ENCODE measurements at regions of chr11 and their contacts with region 1.

Region 1: DNA sequence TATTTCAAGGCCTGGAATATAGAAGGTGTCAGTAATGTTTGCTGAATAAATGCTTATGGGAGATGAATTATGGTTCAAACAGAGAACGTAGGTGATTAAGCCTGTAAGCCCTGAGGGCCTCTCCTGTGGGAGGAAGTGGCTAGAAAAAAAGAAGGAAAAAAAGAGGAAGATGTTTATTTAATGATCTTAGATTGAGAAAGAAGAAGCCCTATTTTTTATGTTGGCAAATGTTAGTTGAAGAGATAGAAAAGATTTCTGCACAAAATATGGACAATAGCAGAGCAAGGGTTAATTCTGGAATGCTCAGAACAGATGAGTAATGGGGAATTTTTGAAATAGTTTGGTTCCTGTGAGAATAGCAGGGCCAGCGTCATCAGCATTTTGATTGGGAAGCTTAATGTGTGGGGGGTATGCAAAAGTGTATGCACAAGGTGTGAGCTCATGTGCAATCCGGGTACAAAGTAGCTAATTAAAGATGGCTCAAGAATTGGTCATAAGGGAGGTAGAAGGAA is 95.7 kb downstream of the TEAD1 start:
- DNase-seq: peak; percentile 81
- H3K4me3 ChIP-seq: no peak overlapping the region
- H3K27ac ChIP-seq: peak overlapping the region; percentile 86
- H3K4me1 ChIP-seq: peaks cover 39% of the 10 kb centered on the region
- H3K27me3 ChIP-seq: no peaks in the 10 kb centered on the region
- CTCF ChIP-seq: no peak

Region 2: DNA sequence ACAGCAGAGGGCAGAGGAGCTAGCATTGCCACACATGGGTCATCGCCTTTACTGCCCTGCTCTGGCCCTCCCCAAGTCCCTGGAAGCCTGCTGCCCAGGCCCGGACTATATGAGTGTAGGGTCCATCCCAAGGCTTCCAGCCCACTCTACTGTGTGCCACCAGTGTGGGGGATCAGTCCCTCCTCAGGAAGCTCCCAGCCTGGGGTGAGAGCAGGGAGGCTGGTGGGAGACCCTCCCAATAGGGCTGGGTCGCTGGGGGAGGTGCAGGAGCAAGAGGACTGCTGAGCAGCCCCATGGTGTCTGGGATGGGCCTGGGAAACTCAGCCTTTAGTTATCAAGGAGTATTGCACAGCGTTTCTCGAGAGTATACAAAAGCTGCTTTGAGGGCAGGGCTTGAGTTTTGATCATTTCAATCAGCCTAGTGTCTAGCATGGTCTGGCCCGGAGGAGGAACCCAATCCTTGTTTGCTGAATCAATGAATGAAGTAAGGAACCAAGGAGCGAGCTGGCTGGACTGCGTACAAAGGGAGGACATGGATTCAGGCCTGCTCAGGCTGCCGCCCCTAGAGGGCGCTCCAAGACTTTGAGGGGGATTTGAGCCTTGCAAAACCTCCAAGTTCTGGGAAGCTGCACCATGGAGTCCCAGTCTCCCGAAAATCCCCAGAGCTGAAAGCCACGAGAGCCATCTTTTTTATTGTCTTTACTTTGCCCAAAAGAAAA is 481.5 kb before region 1 on chr11:
- CTCF ChIA-PET with region 1: interaction called, 11 read pairs
- dilution Hi-C with region 1: no loop called
- in situ Hi-C with region 1: no loop called
- intact Hi-C with region 1: loop called (anchors 5 kb)
- DNase-seq: peak; percentile 76
- H3K4me3 ChIP-seq: no peak overlapping the region
- H3K27ac ChIP-seq: peak overlapping the region; percentile 77
- H3K4me1 ChIP-seq: peaks cover 49% of the 10 kb centered on the region
- H3K27me3 ChIP-seq: no peaks in the 10 kb centered on the region
- CTCF ChIP-seq: peak; percentile 91 to 98

Region 3: GRCh38 chr11:12693479-12694181 is 76.3 kb before region 1 on chr11:
- CTCF ChIA-PET with region 1: no interaction called
- dilution Hi-C with region 1: no loop called
- in situ Hi-C with region 1: no loop called
- intact Hi-C with region 1: loop called (anchors 2 kb)
- DNase-seq: peak; percentile 99
- H3K4me3 ChIP-seq: peak overlapping the region; percentile 25 to 26 (median 26)
- H3K27ac ChIP-seq: peak overlapping the region; percentile 98
- H3K4me1 ChIP-seq: peaks cover 79% of the 10 kb centered on the region
- H3K27me3 ChIP-seq: no peaks in the 10 kb centered on the region
- CTCF ChIP-seq: no peak

Region 4: DNA sequence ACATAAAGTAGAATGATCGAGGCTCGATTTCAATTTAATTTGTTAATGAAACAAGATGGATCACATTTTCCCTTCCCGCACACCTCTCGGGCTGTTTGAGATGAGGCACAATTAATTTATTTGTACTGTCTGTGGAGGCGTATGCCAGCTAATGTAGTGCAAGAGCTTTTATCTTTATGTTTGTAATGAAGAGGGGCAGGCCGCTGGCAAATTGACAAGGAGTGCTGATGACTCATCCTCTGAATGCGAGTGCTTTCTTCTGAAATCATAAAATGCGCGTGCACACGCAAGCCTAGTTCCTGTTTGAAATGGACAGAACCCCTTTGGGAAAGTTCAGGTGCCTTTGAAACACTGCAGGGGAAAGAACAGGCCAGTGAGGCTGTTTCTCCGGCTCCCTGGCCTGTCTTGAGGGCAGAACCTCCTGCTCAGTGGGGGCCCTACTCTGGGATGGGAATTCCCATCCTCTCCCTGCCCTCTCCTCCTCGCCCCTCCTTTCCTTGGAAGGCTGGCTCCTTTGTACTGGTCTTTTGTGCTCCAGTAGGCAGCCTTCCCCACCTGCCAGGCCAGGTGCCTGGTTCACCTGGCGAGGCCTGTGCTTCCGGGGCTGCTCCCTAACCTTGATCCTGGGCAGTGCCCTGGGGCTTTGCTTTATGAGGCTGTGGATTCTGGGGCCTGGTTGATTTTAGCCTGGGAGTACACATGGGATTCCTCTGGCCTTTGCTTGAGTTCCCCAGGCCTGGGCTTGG is 45.4 kb before region 1 on chr11:
- CTCF ChIA-PET with region 1: no interaction called
- dilution Hi-C with region 1: no loop called
- in situ Hi-C with region 1: no loop called
- intact Hi-C with region 1: no loop called
- DNase-seq: peak; percentile 92
- H3K4me3 ChIP-seq: peak overlapping the region in 2 of 3 experiments; percentile 4 to 15
- H3K27ac ChIP-seq: peak overlapping the region; percentile 90
- H3K4me1 ChIP-seq: peaks cover 52% of the 10 kb centered on the region
- H3K27me3 ChIP-seq: no peaks in the 10 kb centered on the region
- CTCF ChIP-seq: no peak

Region 5: GRCh38 chr11:12802418-12803085 is 32.7 kb after region 1 on chr11:
- CTCF ChIA-PET with region 1: no interaction called
- dilution Hi-C with region 1: no loop called
- in situ Hi-C with region 1: no loop called
- intact Hi-C with region 1: loop called (anchors 2 kb)
- DNase-seq: peak; percentile 99
- H3K4me3 ChIP-seq: no peak overlapping the region
- H3K27ac ChIP-seq: peak overlapping the region; percentile 96
- H3K4me1 ChIP-seq: peaks cover 84% of the 10 kb centered on the region
- H3K27me3 ChIP-seq: no peaks in the 10 kb centered on the region
- CTCF ChIP-seq: no peak

Region 6: GRCh38 chr11:12813371-12814225 is 43.7 kb after region 1 on chr11:
- CTCF ChIA-PET with region 1: interaction called, 13 read pairs
- dilution Hi-C with region 1: no loop called
- in situ Hi-C with region 1: no loop called
- intact Hi-C with region 1: no loop called
- DNase-seq: peak; percentile 78
- H3K4me3 ChIP-seq: no peak overlapping the region
- H3K27ac ChIP-seq: peak overlapping the region; percentile 1
- H3K4me1 ChIP-seq: peaks cover 71% of the 10 kb centered on the region
- H3K27me3 ChIP-seq: no peaks in the 10 kb centered on the region
- CTCF ChIP-seq: peak; percentile 18 to 56

Region 7: DNA sequence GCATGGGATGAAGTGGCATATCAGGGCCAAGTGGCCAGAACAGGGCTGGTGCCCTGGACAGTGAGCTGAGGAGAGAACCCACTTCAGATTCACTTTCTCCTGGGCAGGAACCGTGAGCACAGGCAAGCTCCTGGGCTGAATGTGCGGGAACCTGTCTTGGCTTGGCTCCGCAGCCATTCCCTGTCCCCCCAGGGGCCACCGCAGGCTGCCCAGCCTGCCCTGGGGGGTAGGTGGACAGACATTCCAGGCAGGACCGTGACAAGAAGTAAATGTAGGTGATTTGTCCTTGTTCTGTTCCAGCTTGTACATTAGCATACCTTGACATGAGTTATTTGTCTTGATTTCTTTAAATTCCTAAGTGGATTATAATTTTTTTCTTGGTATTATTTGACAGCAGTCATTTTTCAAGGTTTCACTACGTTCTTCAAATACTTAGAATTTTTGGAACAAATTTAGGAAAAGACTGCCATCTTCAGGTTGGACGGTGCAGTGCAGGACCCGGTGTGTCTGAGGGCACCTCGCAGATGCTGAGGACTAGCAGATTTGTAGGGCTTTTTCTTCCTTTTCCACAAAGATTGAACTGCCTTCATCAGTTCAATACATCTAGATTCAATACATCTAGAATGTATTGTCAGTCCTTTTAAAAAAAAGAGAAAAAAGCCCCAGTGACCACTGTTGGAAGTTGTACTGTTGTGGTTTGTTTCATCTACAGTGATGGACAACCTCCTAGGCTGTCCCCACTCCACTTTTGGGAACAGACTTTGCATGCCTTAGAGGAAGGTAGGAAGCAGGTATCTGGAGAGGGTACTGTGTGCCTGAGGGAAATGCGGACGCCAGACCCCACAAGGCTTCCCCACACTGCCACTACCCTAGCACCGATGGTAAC is 124.1 kb after region 1 on chr11:
- CTCF ChIA-PET with region 1: no interaction called
- dilution Hi-C with region 1: no loop called
- in situ Hi-C with region 1: no loop called
- intact Hi-C with region 1: loop called (anchors 5 kb)
- DNase-seq: peak; percentile 42
- H3K4me3 ChIP-seq: no peak overlapping the region
- H3K27ac ChIP-seq: no peak overlapping the region
- H3K4me1 ChIP-seq: peaks cover 18% of the 10 kb centered on the region
- H3K27me3 ChIP-seq: no peaks in the 10 kb centered on the region
- CTCF ChIP-seq: peak; percentile 83 to 91

Region 8: GRCh38 chr11:12914400-12914912 is 144.6 kb after region 1 on chr11:
- CTCF ChIA-PET with region 1: no interaction called
- dilution Hi-C with region 1: no loop called
- in situ Hi-C with region 1: no loop called
- intact Hi-C with region 1: no loop called
- DNase-seq: peak; percentile 32
- H3K4me3 ChIP-seq: no peak overlapping the region
- H3K27ac ChIP-seq: no peak overlapping the region
- H3K4me1 ChIP-seq: peaks cover 3% of the 10 kb centered on the region
- H3K27me3 ChIP-seq: no peaks in the 10 kb centered on the region
- CTCF ChIP-seq: peak; percentile 71 to 74

Measured in mammary epithelial cell (primary cell).